ENCODE measurements at regions of chr10 and their contacts with region 1.

Region 1: GRCh38 chr10:69515699-69516259 is 57.4 kb downstream of the NEUROG3 start:
- DNase-seq: peak; percentile 86
- H3K27ac ChIP-seq: no peak overlapping the region
- CTCF ChIP-seq: peak; percentile 88

Region 2: DNA sequence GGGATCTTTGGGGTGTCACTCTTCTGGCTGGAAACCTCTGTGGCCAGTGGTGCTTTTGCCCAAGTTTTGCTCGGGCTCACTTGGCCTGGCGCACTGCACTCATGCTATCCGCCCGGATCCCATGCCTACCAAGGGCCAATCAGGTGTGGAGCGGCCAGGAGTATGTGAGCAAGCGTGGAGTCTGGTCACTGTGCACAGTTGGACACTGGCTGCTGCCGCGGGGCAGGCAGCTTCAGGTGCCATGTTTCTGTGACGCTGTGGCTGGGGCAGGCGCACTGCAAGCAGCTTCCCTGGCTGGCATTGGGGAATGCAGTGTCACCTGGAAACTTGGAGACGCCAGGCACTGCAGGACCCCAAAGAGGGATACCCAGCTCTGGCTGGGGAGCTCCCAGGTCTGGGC is 12.2 kb after region 1 on chr10:
- CTCF ChIA-PET with region 1: interaction called, 11 read pairs
- POLR2A ChIA-PET with region 1: no interaction called
- DNase-seq: no peak
- H3K27ac ChIP-seq: no peak overlapping the region
- CTCF ChIP-seq: no peak

Region 3: GRCh38 chr10:69624245-69624786 is 108.5 kb after region 1 on chr10:
- CTCF ChIA-PET with region 1: no interaction called
- POLR2A ChIA-PET with region 1: no interaction called
- DNase-seq: no peak
- H3K27ac ChIP-seq: no peak overlapping the region
- CTCF ChIP-seq: no peak

Region 4: DNA sequence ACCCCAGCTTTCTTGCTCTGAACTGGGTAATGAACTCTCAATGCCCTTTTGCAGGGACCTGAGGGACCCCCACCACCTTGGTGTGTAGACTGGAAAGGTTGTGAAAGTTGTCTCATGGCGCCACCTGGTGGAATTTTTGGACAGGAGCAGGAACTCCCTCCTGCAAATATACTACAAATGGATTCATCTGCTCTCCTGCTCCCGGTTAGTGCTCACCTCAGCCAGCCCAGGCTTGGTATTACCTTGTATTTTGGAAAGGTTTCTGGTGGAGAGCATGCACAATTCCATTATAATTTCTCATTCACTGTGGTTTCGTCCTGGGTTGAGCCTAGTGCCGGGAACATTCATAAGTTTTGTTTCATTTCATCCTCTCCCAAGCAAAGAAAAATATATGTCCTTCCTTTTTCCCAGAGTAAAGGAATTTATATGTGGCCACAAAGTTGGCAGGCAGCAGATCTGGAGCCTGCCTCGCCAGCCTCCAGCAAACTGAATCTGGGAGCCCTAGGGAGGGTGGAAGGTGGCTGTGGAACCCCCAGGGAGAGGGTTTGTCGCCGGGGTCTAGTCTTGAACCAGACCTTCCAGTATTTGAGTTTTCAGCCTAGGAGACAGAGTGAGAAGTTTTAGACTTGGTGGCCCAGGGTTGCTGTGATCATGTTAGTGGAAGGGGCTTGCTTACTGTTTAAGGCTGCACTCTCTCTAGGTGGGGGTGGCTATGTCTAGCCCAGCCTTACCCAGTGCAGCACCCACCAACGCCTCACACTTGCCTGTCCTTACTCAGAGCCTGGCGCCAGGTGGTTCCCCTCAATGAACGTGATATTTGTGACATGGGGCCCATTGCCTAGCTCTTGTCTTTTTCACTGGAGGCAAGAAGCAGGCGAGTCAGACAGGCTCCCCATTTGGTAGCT is 123.8 kb after region 1 on chr10:
- CTCF ChIA-PET with region 1: interaction called, 121 read pairs
- POLR2A ChIA-PET with region 1: no interaction called
- DNase-seq: peak; percentile 83
- H3K27ac ChIP-seq: peak overlapping the region; percentile 82
- CTCF ChIP-seq: peak; percentile 87

Region 5: GRCh38 chr10:69696073-69696731 is 180.4 kb after region 1 on chr10:
- CTCF ChIA-PET with region 1: no interaction called
- POLR2A ChIA-PET with region 1: no interaction called
- DNase-seq: peak; percentile 68
- H3K27ac ChIP-seq: no peak overlapping the region
- CTCF ChIP-seq: peak; percentile 27; the same call in 1 of the 2 replicates

Measured in RWPE1 (cell line).